Right cardiac atrium (tissue), 5 donors: ENCODE measurements at regions of chr7 and their contacts with region 1.

Region 1: DNA sequence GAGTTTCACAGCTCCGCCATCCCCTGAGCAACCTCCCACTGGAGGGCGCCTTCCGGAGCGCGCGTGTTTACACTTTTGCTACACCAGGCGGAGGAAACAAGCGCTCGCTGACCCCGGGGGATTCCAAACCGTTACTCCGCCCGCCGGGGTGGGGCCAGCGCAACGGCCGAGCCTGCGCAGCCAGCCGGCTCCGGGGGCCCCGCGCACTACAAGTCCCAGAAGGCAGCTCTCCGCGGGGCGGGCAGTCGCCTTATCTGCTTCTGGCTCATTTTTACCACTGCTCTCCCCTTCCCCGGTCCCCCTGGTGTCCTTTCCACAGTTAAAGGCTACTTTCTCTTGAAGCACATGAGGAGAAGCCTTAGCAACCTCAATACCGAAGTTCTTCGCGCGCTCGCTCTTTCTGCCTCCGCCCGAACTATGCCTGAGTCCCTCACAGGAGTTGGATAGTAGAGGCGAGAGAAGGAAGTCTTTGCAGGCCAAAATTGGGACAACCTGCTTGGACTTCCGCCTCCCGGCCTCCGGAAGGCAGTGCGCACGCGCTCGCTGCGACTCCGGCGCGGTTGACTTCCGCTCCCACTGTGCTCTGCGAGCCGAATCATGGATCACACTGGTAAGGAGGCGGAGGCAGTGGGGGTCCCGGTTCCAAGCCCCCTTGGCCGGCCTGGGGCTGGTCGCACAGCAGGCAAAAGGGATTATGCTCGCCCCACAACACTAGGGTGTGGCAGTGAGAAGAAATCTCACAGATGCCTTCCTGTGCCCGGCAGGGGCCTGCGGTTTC is at the start of gene CBLL1:
- DNase-seq: peak; percentile 97 to 99 (median 99)
- ATAC-seq: peak; percentile 99
- H3K4me3 ChIP-seq: peak within 1 kb of the TSS; percentile 81
- H3K27ac ChIP-seq: peak within 1 kb of the TSS; percentile 99
- H3K4me1 ChIP-seq: peaks cover 4% of the 10 kb centered on the region
- H3K27me3 ChIP-seq: no peaks in the 10 kb centered on the region
- total RNA-seq, gene CBLL1: 15.8 to 21.2 (median 19.2) TPM

Region 2: DNA sequence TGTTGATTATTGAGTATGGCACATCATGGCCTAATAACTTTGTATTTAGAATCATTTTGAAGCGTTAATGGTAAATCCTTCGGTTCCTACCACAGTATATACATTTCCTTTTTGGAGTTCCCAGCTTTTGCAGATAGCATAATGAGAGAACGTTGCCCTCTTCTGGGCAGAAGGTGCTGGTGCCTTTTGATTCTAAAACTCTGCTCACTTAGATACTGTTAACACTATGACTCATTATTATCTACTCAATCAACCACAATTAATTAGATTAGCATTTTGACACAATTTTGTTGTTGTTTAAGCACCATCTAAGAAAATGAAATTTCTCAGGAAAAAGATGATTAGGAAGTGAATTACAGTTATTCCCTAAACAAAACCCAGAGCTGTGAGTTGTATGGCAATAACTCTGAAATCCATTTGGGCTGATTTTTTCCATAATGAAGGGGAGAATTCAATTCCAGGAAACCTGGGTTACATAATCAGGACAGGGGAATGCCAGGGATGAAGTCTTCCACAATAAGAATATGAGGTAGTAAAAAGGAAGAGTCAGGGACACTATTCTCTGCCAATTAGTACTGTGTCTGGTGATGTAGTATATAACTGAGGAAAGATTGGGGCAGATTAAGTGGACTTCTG is 135.8 kb after region 1 on chr7:
- intact Hi-C with region 1: loop called in 3 of 4 experiments (anchors 5 to 10 kb)
- DNase-seq: peak in 1 of 3 donors; percentile 40
- ATAC-seq: peak; percentile 60 to 81
- H3K4me3 ChIP-seq: no peak overlapping the region
- H3K27ac ChIP-seq: no peak overlapping the region
- H3K4me1 ChIP-seq: no peaks in the 10 kb centered on the region
- H3K27me3 ChIP-seq: no peaks in the 10 kb centered on the region

Region 3: GRCh38 chr7:108146070-108146837 is 402.5 kb after region 1 on chr7:
- intact Hi-C with region 1: loop called in 2 of 4 experiments (anchors 10 kb)
- DNase-seq: peak in 2 of 3 donors; percentile 42 to 62
- ATAC-seq: peak; percentile 81 to 84
- H3K4me3 ChIP-seq: peak overlapping the region; percentile 29
- H3K27ac ChIP-seq: no peak overlapping the region
- H3K4me1 ChIP-seq: peaks cover 3% of the 10 kb centered on the region
- H3K27me3 ChIP-seq: no peaks in the 10 kb centered on the region

Region 4: DNA sequence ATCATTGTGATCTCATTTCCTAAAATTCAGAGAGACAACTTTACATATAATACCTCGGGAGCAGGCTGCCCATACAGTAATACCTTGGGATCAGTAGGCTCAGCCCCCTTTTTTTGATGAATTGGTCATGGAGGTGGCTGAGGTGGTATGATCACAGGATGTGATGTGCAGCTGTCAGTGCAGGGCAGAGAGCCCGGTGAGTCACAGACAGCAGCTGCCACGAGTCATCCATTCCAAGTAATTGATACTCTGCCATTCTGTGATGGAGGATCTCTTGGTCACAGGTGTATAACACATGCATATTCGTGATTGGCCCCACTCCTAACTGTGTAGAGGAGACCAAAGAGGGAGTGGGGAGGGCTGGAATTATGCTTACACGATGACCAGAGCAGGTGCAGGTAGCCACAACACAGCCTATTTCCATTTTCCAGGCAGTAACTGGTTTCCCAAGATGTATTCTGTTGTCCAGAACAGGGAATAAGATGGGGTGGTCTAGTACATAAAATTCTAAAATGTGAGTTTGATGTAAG is 698.3 kb after region 1 on chr7:
- intact Hi-C with region 1: no loop called
- DNase-seq: no peak
- ATAC-seq: no peak
- H3K4me3 ChIP-seq: no peak overlapping the region
- H3K27ac ChIP-seq: no peak overlapping the region
- H3K4me1 ChIP-seq: no peaks in the 10 kb centered on the region
- H3K27me3 ChIP-seq: no peaks in the 10 kb centered on the region